ENCODE measurements at regions of chr5 and their contacts with region 1.

Region 1: GRCh38 chr5:80754900-80755299 is 100.1 kb upstream of the DHFR start:
- DNase-seq: peak; percentile 81
- H3K4me3 Mint-ChIP-seq: peak overlapping the region; percentile 32
- H3K27ac Mint-ChIP-seq: peak overlapping the region; percentile 43
- H3K4me1 Mint-ChIP-seq: peaks cover 54% of the 10 kb centered on the region
- H3K27me3 Mint-ChIP-seq: no peaks in the 10 kb centered on the region

Region 2: GRCh38 chr5:80654391-80655230 is 100.3 kb before region 1 on chr5 and contains the starts of genes DHFR and MSH3:
- CTCF ChIA-PET with region 1: no interaction called
- intact Hi-C with region 1: loop called (anchors 1 kb)
- DNase-seq: peak; percentile 95
- H3K4me3 Mint-ChIP-seq: peak within 1 kb of the TSS; percentile 95
- H3K27ac Mint-ChIP-seq: peak within 1 kb of the TSS; percentile 99
- H3K4me1 Mint-ChIP-seq: peaks cover 25% of the 10 kb centered on the region
- H3K27me3 Mint-ChIP-seq: no peaks in the 10 kb centered on the region
- total RNA-seq, gene DHFR: 107 to 112 TPM
- total RNA-seq, gene MSH3: 25.1 to 25.8 TPM

Region 3: GRCh38 chr5:80711938-80712337 is 43.0 kb before region 1 on chr5:
- CTCF ChIA-PET with region 1: no interaction called
- intact Hi-C with region 1: loop called (anchors 2 kb)
- DNase-seq: peak; percentile 33
- H3K4me3 Mint-ChIP-seq: no peak overlapping the region
- H3K27ac Mint-ChIP-seq: no peak overlapping the region
- H3K4me1 Mint-ChIP-seq: peaks cover 6% of the 10 kb centered on the region
- H3K27me3 Mint-ChIP-seq: no peaks in the 10 kb centered on the region

Region 4: DNA sequence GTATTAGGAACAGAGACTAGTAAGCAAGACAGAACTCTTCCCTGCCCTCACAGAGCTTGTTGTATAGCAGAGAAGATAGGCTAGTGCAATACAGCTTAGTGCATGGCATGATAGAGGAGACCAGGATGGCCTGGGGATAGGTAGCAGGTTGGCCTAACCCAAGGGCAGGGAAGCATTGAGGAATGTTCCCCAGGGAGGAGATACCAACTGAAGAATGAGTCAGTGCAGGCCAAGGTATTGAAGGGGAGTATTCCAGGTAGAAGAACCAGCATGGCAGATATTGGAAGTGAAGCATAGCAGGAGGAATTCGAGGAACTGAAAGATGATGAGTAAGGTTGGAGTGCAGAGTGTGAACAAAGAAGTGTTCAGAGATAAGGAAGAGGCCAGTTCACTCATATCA is 38.5 kb after region 1 on chr5:
- CTCF ChIA-PET with region 1: no interaction called
- intact Hi-C with region 1: loop called (anchors 1 kb)
- DNase-seq: no peak
- H3K4me3 Mint-ChIP-seq: no peak overlapping the region
- H3K27ac Mint-ChIP-seq: no peak overlapping the region
- H3K4me1 Mint-ChIP-seq: peaks cover 12% of the 10 kb centered on the region
- H3K27me3 Mint-ChIP-seq: no peaks in the 10 kb centered on the region

Region 5: DNA sequence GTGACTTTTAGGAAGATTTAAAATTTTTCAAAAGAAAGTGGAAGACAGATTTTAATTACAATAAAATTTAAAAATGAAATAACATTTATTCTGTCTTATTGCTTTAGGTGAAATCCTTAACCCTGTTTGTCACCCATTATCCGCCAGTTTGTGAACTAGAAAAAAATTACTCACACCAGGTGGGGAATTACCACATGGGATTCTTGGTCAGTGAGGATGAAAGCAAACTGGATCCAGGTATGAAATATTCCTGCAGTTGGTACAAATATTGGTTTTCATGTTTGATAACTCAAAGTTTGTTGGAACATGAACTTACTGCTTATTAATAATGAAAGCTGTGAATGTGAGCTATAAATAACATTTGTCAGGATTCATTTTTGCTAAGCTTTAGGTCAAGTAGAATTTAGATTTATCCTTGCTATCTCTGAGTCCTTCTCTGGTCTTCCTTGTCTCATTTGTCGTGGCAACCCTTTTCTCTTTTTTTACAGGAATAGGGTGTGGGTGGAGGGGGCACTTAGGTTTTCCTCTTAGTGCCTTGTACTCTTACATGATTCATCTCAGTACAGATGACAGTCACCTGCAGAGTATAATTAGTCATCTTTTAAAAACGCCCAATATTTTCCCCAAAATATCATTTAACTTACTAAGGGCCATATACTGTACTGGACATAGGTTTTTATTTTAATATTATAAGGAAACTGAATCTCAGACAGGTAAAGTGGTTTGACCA is 110.0 kb after region 1 on chr5:
- CTCF ChIA-PET with region 1: no interaction called
- intact Hi-C with region 1: loop called (anchors 1 kb)
- DNase-seq: peak; percentile 30
- H3K4me3 Mint-ChIP-seq: no peak overlapping the region
- H3K27ac Mint-ChIP-seq: peak overlapping the region; percentile 21
- H3K4me1 Mint-ChIP-seq: peaks cover 47% of the 10 kb centered on the region
- H3K27me3 Mint-ChIP-seq: no peaks in the 10 kb centered on the region